Sciatic nerve (tissue), 2 donors: ENCODE measurements at regions of chr4 and their contacts with region 1.

Region 1: GRCh38 chr4:48578132-48578968 is 88.3 kb downstream of the ZAR1 start:
- DNase-seq: no peak
- ATAC-seq: peak; percentile 92

Region 2: DNA sequence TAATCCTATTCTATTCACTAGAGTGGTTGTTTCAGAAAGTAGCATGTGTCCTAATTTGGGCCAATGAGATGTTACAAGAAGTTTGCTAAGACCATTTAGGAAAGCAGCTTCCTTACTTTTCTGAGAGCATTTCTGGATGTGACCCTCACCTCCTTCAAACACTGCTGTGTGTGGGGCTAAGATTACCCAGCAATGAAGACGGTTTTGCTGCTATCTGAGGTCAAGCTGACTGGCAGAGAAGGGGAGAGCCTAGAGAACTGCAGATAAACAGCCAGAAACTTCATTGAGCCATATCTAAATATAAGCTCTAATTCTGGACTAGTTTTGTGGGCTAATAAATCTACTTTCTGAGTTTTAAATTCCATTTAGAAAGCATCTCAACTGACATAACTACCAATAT is 51.9 kb before region 1 on chr4:
- intact Hi-C with region 1: no loop called
- DNase-seq: no peak
- ATAC-seq: no peak

Region 3: GRCh38 chr4:48968759-48969158 is 390.4 kb after region 1 on chr4:
- intact Hi-C with region 1: loop called (anchors 2 kb)
- DNase-seq: no peak
- ATAC-seq: no peak